GM23248 (cell line): ENCODE measurements at regions of chr17 and their contacts with region 1.

Region 1: GRCh38 chr17:43398724-43399595 is at the start of gene ARL4D:
- DNase-seq: peak; percentile 94
- H3K4me3 ChIP-seq: peak within 1 kb of the TSS; percentile 88
- H3K27ac ChIP-seq: peak within 1 kb of the TSS; percentile 98
- H3K4me1 ChIP-seq: peaks cover 21% of the 10 kb centered on the region
- H3K27me3 ChIP-seq: no peaks in the 10 kb centered on the region
- total RNA-seq, gene ARL4D: 23.0 and 27.8 TPM in 2 replicates

Region 2: GRCh38 chr17:43483674-43484372 is 84.9 kb after region 1 on chr17 and contains the start of gene DHX8:
- in situ Hi-C with region 1: loop called (anchors 5 kb)
- DNase-seq: peak; percentile 99
- H3K4me3 ChIP-seq: peak within 1 kb of the TSS; percentile 91
- H3K27ac ChIP-seq: peak within 1 kb of the TSS; percentile 75
- H3K4me1 ChIP-seq: peaks cover 20% of the 10 kb centered on the region
- H3K27me3 ChIP-seq: no peaks in the 10 kb centered on the region
- total RNA-seq, gene DHX8: 27.3 and 33.1 TPM in 2 replicates